AG04450 (cell line): ENCODE measurements at regions of chr15 and their contacts with region 1.

Region 1: DNA sequence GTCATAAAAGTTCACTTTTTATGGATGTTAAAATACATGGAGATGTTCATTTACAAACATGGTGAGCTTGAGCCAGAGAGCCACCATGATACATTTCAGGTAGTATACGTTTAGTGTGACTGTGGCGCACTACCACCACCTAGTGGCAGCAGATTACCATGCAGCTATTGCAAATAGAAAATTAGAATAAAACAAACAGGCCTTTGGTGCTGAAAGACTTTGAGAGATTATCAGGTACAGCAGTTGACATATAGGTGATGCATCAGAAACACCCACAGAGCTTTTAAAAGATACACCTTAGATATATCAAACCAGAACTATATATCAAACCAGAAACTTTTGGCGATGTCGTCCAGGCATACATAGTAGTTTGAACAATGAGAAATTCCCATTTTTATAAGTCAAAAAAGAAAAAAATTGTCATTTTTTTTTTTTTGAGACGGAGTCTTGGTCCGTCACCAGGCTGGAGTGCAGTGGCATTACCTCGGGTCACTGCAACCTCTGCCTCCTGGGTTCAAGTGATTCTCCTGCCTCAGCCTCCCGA is 42.0 kb upstream of the ICE2 start:
- DNase-seq: peak; percentile 47
- H3K4me3 ChIP-seq: no peak overlapping the region
- H3K27ac ChIP-seq: no peak overlapping the region
- H3K27me3 ChIP-seq: no peaks in the 10 kb centered on the region
- CTCF ChIP-seq: peak; percentile 92

Region 2: GRCh38 chr15:59725172-59725486 is 795.8 kb before region 1 on chr15:
- CTCF ChIA-PET with region 1: interaction called, 13 read pairs
- POLR2A ChIA-PET with region 1: no interaction called
- DNase-seq: no peak
- H3K4me3 ChIP-seq: no peak overlapping the region
- H3K27ac ChIP-seq: no peak overlapping the region
- H3K27me3 ChIP-seq: peaks cover 4% of the 10 kb centered on the region
- CTCF ChIP-seq: no peak

Region 3: GRCh38 chr15:60362321-60363086 is 158.4 kb before region 1 on chr15:
- CTCF ChIA-PET with region 1: interaction called, 67 read pairs
- POLR2A ChIA-PET with region 1: no interaction called
- DNase-seq: peak; percentile 33
- H3K4me3 ChIP-seq: no peak overlapping the region
- H3K27ac ChIP-seq: peak overlapping the region; percentile 79
- H3K27me3 ChIP-seq: no peaks in the 10 kb centered on the region
- CTCF ChIP-seq: no peak

Region 4: DNA sequence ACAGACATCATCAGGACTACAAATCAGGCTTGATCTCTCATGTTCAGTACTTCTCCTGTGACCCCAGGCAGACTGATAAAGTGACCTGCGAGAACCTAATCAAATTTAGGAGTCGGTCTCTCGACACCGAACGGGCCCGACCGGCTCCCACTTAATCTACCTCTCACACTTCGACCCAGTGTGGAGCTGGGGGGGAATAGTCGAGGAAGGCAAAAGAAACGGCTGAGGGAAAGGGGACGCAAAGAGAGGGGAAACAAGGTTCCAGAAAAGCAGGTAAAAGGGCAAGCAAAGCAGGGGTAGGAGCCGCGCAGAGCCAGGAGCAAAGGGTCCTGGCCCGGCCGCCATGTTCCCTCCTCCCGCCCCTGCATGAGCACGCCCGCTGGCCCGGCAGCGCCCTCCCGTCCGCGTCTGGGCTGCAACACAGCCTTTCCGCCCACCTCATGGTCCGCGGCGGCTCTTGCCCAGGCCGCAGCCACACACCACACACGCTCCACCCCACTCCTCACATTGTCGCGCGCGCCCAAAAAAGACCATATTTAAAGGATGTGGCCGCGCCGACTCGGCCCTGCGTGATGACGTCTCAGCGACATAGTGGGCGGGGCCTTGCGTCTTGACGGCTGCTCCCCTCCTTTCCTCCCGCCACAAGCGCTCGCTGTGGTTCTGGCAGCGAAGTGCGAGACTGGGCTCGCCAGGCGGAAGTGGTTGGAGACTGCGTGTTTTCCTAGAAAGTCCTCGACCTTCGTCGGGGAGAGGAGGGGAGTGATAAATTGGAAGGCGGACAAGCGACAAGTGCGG is 42.1 kb before region 1 on chr15 and contains the start of gene ICE2:
- CTCF ChIA-PET with region 1: interaction called, 10 read pairs
- POLR2A ChIA-PET with region 1: no interaction called
- DNase-seq: peak; percentile 83
- H3K4me3 ChIP-seq: peak within 1 kb of the TSS; percentile 77
- H3K27ac ChIP-seq: peak within 1 kb of the TSS; percentile 91
- H3K27me3 ChIP-seq: no peaks in the 10 kb centered on the region
- CTCF ChIP-seq: 0 out of 2 replicates have a peak, but pooled peaks have one; percentile 9
- polyA plus RNA-seq, gene ICE2: 23.6 and 29.3 TPM in 2 replicates

Region 5: GRCh38 chr15:60507596-60508424 is 13.1 kb before region 1 on chr15:
- CTCF ChIA-PET with region 1: interaction called, 79 read pairs
- POLR2A ChIA-PET with region 1: no interaction called
- DNase-seq: peak; percentile 38
- H3K4me3 ChIP-seq: no peak overlapping the region
- H3K27ac ChIP-seq: no peak overlapping the region
- H3K27me3 ChIP-seq: no peaks in the 10 kb centered on the region
- CTCF ChIP-seq: peak; percentile 98

Region 6: DNA sequence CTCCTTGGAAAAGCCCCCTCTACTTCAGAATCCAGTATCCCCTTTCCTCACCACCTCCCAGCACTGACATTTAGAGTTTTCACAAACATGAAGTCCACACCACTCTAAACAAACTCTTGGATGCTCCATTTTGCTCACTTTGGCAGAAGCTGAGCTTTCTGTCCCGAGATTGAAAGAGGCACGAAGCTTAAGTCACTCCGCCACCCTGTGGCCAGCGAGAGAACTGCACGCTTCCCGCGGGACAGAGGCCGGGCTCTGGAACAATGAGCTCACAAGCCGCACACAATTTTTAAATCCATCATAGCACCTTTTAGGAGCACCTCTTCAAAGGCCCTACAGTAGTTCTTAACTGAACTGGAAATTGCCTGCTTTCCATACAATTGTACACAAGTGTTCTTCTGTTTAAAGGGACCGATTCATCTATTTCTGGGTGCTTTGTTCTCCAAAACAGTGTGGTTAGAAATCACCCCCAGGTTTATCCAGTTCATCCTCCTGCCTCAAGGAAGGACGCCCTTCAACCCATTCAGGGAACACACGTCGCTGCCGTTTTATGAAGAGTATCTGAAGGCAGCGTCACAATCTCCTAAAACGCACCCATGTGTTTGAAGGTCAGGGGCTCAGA is 1313.3 kb after region 1 on chr15:
- CTCF ChIA-PET with region 1: interaction called, 16 read pairs
- POLR2A ChIA-PET with region 1: no interaction called
- DNase-seq: peak; percentile 47
- H3K4me3 ChIP-seq: no peak overlapping the region
- H3K27ac ChIP-seq: no peak overlapping the region
- H3K27me3 ChIP-seq: peaks cover 8% of the 10 kb centered on the region
- CTCF ChIP-seq: peak; percentile 95